ENCODE measurements at regions of chr5 and their contacts with region 1.

Region 1: GRCh38 chr5:118844351-118844750 is 144.0 kb downstream of the DTWD2 start:
- DNase-seq: no peak
- ATAC-seq: no peak
- H3K4me3 ChIP-seq: no peak overlapping the region
- H3K27ac ChIP-seq: no peak overlapping the region
- H3K4me1 ChIP-seq: no peaks in the 10 kb centered on the region
- H3K27me3 ChIP-seq: no peaks in the 10 kb centered on the region
- CTCF ChIP-seq: no peak

Region 2: GRCh38 chr5:118806571-118806970 is 37.8 kb before region 1 on chr5:
- intact Hi-C with region 1: loop called in 1 of 10 experiments (anchors 1 kb)
- DNase-seq: no peak
- ATAC-seq: no peak
- H3K4me3 ChIP-seq: no peak overlapping the region
- H3K27ac ChIP-seq: no peak overlapping the region
- H3K4me1 ChIP-seq: no peaks in the 10 kb centered on the region
- H3K27me3 ChIP-seq: no peaks in the 10 kb centered on the region
- CTCF ChIP-seq: no peak